Activated CD4-positive, alpha-beta memory T cell treated with anti-CD3 and anti-CD28 coated beads for 36 hours (primary cell): ENCODE measurements at regions of chr10 and their contacts with region 1.

Region 1: GRCh38 chr10:15168781-15169554 is 475 bp upstream of the NMT2 start:
- DNase-seq: peak; percentile 98
- H3K4me3 Mint-ChIP-seq: peak overlapping the region; percentile 72
- H3K27ac Mint-ChIP-seq: peak overlapping the region; percentile 85
- H3K4me1 Mint-ChIP-seq: peaks cover 48% of the 10 kb centered on the region
- H3K27me3 Mint-ChIP-seq: no peaks in the 10 kb centered on the region

Region 2: DNA sequence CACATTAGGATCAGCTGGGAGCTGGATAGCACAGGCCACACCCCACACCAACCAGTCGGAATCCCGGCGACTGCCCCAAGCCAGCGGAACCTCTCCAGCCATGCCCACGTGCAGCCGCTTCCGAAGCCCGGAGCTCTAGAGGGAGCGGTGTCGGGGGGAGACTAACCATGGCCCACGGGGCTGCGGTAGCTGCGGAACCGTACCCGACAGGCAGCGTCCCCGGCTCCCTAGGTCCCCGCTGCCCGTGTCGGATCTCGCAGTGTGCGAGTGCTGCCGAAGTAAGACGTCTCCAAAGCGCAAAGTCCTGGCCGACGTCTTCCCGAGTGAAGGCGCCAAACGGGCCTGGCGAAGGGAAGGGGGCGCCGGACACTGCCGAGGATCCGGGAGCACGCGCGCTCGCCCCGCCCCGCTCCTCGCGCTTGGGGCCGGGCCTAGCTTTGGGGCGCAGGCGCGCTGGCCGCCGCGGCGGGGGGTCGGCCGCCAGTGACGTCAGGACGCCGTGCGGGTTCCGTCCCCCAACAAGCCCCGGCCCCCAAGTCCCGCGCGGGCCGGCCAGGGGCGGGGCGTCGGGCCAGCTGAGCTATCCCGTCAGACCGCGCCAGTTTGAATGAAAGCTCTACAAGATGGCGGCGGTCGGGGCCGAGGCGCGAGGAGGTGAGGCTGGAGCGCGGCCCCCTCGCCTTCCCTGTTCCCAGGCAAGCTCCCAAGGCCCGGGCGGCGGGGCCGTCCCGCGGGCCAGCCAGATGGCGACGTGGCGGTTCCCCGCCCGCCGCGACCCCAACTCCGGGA is 290.5 kb before region 1 on chr10 and contains the start of gene SUV39H2:
- CTCF ChIA-PET with region 1: no interaction called
- POLR2A ChIA-PET with region 1: interaction called, 3 read pairs
- intact Hi-C with region 1: loop called (anchors 1 kb)
- DNase-seq: peak; percentile 96
- H3K4me3 Mint-ChIP-seq: peak within 1 kb of the TSS; percentile 94
- H3K27ac Mint-ChIP-seq: peak within 1 kb of the TSS; percentile 80
- H3K4me1 Mint-ChIP-seq: peaks cover 41% of the 10 kb centered on the region
- H3K27me3 Mint-ChIP-seq: no peaks in the 10 kb centered on the region
- total RNA-seq, gene SUV39H2: 38.7 to 39.8 TPM

Region 3: DNA sequence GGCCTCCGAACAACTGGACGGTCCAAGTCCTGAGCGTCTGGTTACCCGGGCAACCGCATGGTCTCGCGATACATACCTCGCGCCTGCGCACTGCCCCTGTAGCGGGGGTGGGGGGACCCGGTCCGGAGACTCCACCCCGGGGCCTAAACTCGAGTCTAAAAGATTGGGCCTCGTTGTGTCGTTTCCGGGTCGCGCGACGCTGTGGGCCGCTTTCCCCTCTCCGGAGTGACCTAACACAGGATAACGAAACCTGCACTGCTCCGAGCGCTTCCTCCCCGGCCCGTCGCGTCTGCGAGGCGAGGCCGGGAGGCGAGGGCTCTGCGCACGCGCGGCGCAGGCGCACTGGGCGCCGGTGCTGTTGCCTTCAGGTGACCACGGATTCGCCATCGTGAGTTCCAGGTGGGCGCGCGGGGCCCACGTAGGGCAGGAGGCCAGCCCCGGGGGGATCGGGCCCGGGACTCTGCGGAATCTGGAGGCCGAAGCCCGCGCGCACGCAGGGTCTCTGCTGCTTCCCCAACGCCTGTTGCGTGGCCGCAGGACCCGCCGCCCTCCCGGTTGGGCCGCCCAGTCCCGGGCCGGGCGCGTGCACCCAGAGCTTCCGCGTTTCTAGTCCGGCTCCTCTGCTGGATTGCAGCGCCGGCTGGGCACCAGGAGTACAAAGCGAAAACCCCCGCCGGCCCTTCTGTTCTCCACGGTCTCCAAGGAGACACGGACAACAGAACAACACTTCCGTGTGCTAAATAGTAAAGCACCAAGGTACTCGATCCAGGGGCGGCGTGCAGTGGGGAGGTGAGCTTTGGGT is 71.8 kb before region 1 on chr10 and contains the start of gene RPP38:
- CTCF ChIA-PET with region 1: no interaction called
- POLR2A ChIA-PET with region 1: no interaction called
- intact Hi-C with region 1: loop called (anchors 1 kb)
- DNase-seq: peak; percentile 97
- H3K4me3 Mint-ChIP-seq: peak within 1 kb of the TSS; percentile 94
- H3K27ac Mint-ChIP-seq: peak within 1 kb of the TSS; percentile 94
- H3K4me1 Mint-ChIP-seq: peaks cover 29% of the 10 kb centered on the region
- H3K27me3 Mint-ChIP-seq: no peaks in the 10 kb centered on the region
- total RNA-seq, gene RPP38: 18.3 to 19.2 TPM

Region 4: GRCh38 chr10:15112657-15113056 is 56.3 kb before region 1 on chr10:
- CTCF ChIA-PET with region 1: no interaction called
- POLR2A ChIA-PET with region 1: no interaction called
- intact Hi-C with region 1: no loop called
- DNase-seq: peak; percentile 30
- H3K4me3 Mint-ChIP-seq: no peak overlapping the region
- H3K27ac Mint-ChIP-seq: peak overlapping the region; percentile 28
- H3K4me1 Mint-ChIP-seq: peaks cover 6% of the 10 kb centered on the region
- H3K27me3 Mint-ChIP-seq: no peaks in the 10 kb centered on the region

Region 5: GRCh38 chr10:15141136-15142054 is 27.6 kb before region 1 on chr10:
- CTCF ChIA-PET with region 1: interaction called, 3 read pairs
- POLR2A ChIA-PET with region 1: no interaction called
- intact Hi-C with region 1: loop called (anchors 1 kb)
- DNase-seq: peak; percentile 51
- H3K4me3 Mint-ChIP-seq: peak overlapping the region; percentile 33
- H3K27ac Mint-ChIP-seq: peak overlapping the region; percentile 35
- H3K4me1 Mint-ChIP-seq: peaks cover 45% of the 10 kb centered on the region
- H3K27me3 Mint-ChIP-seq: no peaks in the 10 kb centered on the region

Region 6: GRCh38 chr10:15370856-15371701 is 202.1 kb after region 1 on chr10 and contains the start of gene FAM171A1:
- CTCF ChIA-PET with region 1: interaction called, 3 read pairs
- POLR2A ChIA-PET with region 1: no interaction called
- intact Hi-C with region 1: loop called (anchors 2 kb)
- DNase-seq: peak; percentile 76
- H3K4me3 Mint-ChIP-seq: peak within 1 kb of the TSS; percentile 70
- H3K27ac Mint-ChIP-seq: no peak within 1 kb of the TSS
- H3K4me1 Mint-ChIP-seq: peaks cover 9% of the 10 kb centered on the region
- H3K27me3 Mint-ChIP-seq: peaks cover 16% of the 10 kb centered on the region
- total RNA-seq, gene FAM171A1: 3.3 to 4.0 TPM

Region 7: DNA sequence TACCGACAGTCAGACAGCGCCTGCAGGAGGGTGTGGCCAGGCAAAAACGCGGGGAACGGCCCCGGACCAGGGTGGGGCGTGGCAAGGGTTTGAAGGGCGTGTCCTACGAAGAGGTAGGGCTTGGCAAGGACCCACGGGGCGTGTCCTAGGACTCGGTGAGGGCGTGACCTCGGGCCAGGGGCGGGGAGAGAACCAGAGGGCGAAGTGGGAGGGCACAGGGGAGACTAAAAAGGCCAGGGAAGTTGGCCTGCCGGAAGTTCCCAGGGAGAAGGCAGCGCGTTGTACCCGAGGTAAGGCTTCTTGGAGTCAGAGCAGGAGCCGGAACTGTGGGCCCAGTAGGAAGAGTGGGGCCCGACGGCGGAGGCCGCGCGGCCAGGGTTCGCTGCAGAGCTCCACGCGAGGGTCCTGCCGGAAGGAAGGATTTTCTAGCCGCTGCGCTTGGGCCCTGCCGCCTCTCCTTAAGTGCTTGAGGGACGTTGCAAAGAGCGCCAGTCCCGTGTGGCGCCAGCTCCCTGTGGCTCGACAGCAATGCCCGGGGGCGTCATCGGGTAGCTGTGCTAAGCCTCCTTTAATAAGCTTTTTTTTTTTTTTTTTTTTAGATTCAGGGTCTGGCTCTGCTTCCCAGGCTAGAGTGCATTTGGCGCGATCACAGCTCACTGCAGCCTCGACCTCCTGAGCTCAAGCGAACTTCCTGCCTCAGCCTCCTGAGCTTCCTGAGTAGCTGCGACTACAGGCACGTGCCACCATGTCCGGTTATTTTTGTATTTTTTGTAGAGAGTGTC is 1268.0 kb after region 1 on chr10 and contains the start of gene PTER:
- CTCF ChIA-PET with region 1: no interaction called
- POLR2A ChIA-PET with region 1: no interaction called
- intact Hi-C with region 1: loop called (anchors 2 kb)
- DNase-seq: peak; percentile 99
- H3K4me3 Mint-ChIP-seq: peak within 1 kb of the TSS; percentile 86
- H3K27ac Mint-ChIP-seq: peak within 1 kb of the TSS; percentile 84
- H3K4me1 Mint-ChIP-seq: peaks cover 43% of the 10 kb centered on the region
- H3K27me3 Mint-ChIP-seq: no peaks in the 10 kb centered on the region
- total RNA-seq, gene PTER: 25.1 to 27.2 TPM